ENCODE measurements at regions of chr2 and their contacts with region 1.

Region 1: DNA sequence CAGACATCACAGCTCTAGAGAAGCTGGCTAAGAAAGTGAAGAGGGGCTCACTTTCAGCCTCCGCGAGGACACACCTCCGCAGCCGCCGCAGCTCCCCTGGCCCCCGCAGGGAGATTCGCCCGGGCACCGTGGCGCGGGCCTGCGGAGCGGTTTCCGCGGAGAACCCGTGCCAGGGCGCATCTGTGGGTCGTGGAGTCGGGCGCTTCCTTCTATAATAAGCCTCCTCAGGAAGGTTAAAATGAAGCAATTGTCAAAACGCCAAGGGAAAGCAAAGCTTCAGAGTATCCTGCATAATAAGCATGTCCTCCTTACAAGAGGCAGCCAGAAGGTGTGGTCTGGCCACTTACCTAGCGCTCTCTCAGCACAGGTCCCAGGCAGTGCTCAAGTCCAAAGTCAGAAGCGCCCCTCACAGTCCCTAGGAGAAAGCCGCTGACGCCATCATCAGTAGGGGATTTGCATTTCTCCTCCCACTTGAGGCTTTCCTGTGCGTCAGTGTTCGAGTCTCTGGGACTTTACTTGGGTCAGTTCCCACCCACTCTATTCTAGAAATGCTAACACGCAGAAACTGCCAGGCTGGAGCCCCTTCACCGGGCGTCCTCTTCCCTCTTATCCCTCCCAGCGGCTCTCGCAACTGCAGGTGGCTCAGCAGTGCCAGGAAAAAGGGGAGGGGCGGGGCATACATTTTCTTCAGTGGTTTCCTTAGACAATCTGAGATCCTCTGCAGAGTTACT is at the start of gene STAT4:
- DNase-seq: peak; percentile 87 to 95 (median 89)
- H3K4me3 ChIP-seq: peak within 1 kb of the TSS; percentile 89 to 92
- H3K4me3 Mint-ChIP-seq: peak within 1 kb of the TSS; percentile 81 to 98 (median 96)
- H3K27ac ChIP-seq: peak within 1 kb of the TSS; percentile 99
- H3K27ac Mint-ChIP-seq: peak within 1 kb of the TSS; percentile 93 to 100 (median 98)
- H3K4me1 ChIP-seq: peaks cover 42% of the 10 kb centered on the region
- H3K4me1 Mint-ChIP-seq: peaks cover 31 to 74% (median 48%) of the 10 kb centered on the region in 4 donors
- H3K27me3 ChIP-seq: no peaks in the 10 kb centered on the region
- H3K27me3 Mint-ChIP-seq: no peaks in the 10 kb centered on the region
- total RNA-seq, gene STAT4: 114 to 119 TPM

Region 2: DNA sequence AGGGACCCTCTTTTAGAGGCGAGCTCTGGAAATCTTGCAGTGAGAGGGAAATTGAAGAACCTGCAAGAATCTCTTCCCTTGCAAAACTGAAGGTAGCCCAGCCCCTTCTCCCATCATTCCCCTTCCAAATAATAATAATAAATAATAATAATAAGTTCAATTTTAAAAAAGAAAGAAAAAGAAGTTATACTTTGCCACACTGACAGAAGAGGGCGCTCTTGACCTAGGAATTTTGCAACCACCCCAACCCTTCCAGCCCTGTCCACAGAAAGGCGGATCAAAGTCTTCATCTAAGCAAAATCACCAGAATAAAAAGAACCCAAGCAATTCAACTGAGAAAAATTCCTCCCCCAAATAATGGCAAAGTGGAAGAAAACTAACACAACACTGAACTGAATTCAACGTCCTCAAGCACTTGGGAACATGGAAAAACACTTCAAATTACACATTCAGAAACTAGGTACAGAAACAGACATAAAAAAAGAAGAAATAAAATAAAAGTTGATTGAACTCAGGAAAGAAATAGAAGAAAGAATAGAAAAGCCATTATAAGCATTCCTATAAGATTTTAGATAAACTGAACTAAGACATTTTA is 369.1 kb before region 1 on chr2:
- CTCF ChIA-PET with region 1: interaction called, 8 read pairs
- POLR2A ChIA-PET with region 1: no interaction called
- intact Hi-C with region 1: loop called (anchors 1 kb)
- DNase-seq: peak in 4 of 5 donors; percentile 35 to 51 (median 50)
- H3K4me3 ChIP-seq: no peak overlapping the region
- H3K4me3 Mint-ChIP-seq: no peak overlapping the region
- H3K27ac ChIP-seq: no peak overlapping the region
- H3K27ac Mint-ChIP-seq: peak overlapping the region in 1 of 7 donors; percentile 65
- H3K4me1 ChIP-seq: no peaks in the 10 kb centered on the region
- H3K4me1 Mint-ChIP-seq: peaks cover 0 to 3% (median 1%) of the 10 kb centered on the region in 4 donors
- H3K27me3 ChIP-seq: no peaks in the 10 kb centered on the region
- H3K27me3 Mint-ChIP-seq: peaks cover 3 to 9% of the 10 kb centered on the region in 2 donors

Region 3: DNA sequence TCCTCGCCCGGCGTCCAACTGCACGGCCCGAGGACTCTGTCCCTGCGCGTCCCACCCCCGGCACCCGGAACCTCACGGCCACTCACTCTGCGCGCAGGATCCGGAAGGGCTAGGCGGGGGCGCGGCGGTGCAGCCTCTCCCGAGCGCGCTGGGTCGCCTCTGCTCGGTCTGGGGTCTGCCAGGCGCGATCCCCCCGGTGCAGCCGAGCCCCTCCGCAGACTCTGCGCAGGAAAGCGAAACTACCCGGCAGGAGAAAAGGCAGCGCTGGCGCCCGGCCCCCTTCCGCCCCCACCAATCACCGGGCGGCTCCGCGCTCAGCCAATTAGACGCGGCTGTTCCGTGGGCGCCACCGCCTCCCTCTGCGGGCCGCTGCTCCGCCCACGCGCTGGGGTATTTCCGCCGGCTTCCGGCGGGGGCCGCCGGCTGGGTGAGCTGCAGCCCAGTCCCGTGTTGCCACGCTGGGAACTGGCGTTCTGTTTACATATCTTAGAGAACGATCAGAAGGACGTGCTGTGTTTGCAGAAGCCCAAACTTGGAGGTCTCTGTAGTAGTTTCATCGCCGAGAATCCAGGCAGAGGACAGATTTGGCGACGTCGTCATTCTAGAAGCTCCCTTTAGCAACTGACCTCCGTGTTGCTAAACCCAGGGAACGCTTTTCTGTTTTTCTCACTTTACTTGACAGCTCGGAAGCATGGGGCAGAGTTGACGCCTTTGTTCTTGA is 136.7 kb before region 1 on chr2 and contains the start of gene STAT1:
- CTCF ChIA-PET with region 1: interaction called, 9 read pairs
- POLR2A ChIA-PET with region 1: interaction called, 38 read pairs
- intact Hi-C with region 1: no loop called
- DNase-seq: peak; percentile 94 to 98 (median 96)
- H3K4me3 ChIP-seq: peak within 1 kb of the TSS; percentile 92 to 95
- H3K4me3 Mint-ChIP-seq: no peak within 1 kb of the TSS
- H3K27ac ChIP-seq: peak within 1 kb of the TSS; percentile 89
- H3K27ac Mint-ChIP-seq: no peak within 1 kb of the TSS
- H3K4me1 ChIP-seq: peaks cover 71% of the 10 kb centered on the region
- H3K4me1 Mint-ChIP-seq: peaks cover 29 to 48% (median 33%) of the 10 kb centered on the region in 4 donors
- H3K27me3 ChIP-seq: no peaks in the 10 kb centered on the region
- H3K27me3 Mint-ChIP-seq: no peaks in the 10 kb centered on the region
- total RNA-seq, gene STAT1: 130 TPM

Region 4: DNA sequence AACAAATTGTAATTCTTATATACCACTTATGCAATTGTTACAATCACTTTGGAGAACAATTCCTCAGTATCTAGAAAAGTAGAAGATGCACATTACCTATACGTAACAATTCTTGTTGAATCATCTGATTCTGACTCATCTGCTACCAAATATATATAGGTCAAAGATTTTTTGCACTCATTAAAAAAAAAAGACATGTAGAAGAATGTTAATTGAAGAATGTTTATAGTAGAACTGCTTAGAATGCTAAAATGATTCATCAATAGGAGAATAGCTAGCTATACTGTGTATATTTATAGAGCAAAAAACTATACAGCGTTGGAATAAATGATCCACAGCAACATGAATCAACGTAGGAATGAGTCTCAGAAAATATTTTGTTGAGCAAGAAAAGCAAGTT is 107.3 kb before region 1 on chr2:
- CTCF ChIA-PET with region 1: interaction called, 567 read pairs
- POLR2A ChIA-PET with region 1: interaction called, 11 read pairs
- intact Hi-C with region 1: no loop called
- DNase-seq: no peak
- H3K4me3 ChIP-seq: no peak overlapping the region
- H3K4me3 Mint-ChIP-seq: no peak overlapping the region
- H3K27ac ChIP-seq: no peak overlapping the region
- H3K27ac Mint-ChIP-seq: peak overlapping the region in 2 of 7 donors; percentile 25 to 40
- H3K4me1 ChIP-seq: peaks cover 17% of the 10 kb centered on the region
- H3K4me1 Mint-ChIP-seq: peaks cover 15 to 34% (median 23%) of the 10 kb centered on the region in 4 donors
- H3K27me3 ChIP-seq: no peaks in the 10 kb centered on the region
- H3K27me3 Mint-ChIP-seq: no peaks in the 10 kb centered on the region

Region 5: DNA sequence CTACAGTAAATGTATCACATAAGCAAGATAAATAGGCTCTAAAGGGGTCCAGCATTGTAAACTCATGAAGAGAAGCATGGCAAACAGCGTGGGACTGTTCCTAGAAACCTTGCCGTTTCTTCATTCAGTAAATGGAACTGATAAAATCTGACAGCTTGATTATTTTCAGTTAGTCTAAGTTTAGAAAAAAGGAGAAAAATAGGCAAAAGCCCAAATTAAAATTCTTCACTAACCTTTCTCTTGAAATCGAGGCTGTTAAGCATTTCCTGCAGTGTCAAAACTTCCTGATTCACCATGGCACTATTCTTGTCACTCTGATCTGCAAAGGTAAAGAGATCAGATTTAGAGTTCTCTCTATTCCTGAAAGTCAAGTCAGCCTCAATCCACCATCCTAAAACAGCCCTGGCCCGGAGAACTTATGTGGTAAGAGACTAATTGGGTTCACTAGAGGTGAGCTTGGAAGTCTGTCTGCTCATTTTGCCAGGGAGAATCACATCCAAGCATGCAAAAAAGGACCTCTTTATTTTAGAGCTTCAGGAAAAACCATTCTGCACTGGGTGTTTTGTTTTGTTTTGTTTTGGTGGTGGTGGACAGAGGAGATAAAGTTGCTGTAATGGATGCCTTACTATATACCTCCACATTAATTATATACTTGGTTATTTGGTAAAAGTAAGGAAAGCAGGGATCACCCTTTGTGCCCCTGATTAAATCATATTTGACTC is 84.4 kb before region 1 on chr2:
- CTCF ChIA-PET with region 1: interaction called, 68 read pairs
- POLR2A ChIA-PET with region 1: interaction called, 91 read pairs
- intact Hi-C with region 1: no loop called
- DNase-seq: peak in 1 of 5 donors; percentile 11
- H3K4me3 ChIP-seq: peak overlapping the region in 1 of 2 donors; percentile 4
- H3K4me3 Mint-ChIP-seq: peak overlapping the region; percentile 28 to 86 (median 74)
- H3K27ac ChIP-seq: peak overlapping the region; percentile 56
- H3K27ac Mint-ChIP-seq: peak overlapping the region; percentile 64 to 93 (median 87)
- H3K4me1 ChIP-seq: peaks cover 96% of the 10 kb centered on the region
- H3K4me1 Mint-ChIP-seq: peaks cover 66 to 86% (median 76%) of the 10 kb centered on the region in 4 donors
- H3K27me3 ChIP-seq: no peaks in the 10 kb centered on the region
- H3K27me3 Mint-ChIP-seq: no peaks in the 10 kb centered on the region

Region 6: DNA sequence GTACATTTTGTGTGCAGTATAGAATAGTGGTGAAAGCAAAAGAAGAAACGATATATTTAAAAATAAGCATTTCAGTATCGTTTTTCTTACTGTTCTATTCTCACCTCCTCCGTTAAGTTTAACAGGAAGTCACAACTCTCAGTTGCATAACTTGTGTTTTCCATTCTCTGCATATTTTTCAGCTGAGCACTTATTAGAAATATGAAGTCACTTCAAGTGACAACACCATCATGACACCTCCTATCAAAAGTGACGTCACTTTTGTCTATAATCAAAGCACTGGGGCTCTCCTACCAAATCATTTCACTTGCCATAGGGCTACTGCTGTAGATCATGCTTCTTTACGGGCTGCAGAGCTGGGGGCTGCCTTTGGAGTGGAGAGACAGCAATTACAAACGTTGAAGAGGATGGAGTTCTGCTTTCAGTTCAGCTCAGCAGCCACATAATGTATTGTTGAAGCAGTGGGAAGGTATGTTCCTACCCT is 36.3 kb before region 1 on chr2:
- CTCF ChIA-PET with region 1: interaction called, 22 read pairs
- POLR2A ChIA-PET with region 1: interaction called, 77 read pairs
- intact Hi-C with region 1: loop called (anchors 1 kb)
- DNase-seq: peak; percentile 43 to 71 (median 57)
- H3K4me3 ChIP-seq: peak overlapping the region in 1 of 2 donors; percentile 35
- H3K4me3 Mint-ChIP-seq: peak overlapping the region; percentile 53 to 78 (median 72)
- H3K27ac ChIP-seq: peak overlapping the region; percentile 55
- H3K27ac Mint-ChIP-seq: peak overlapping the region; percentile 89 to 97 (median 93)
- H3K4me1 ChIP-seq: peaks cover 50% of the 10 kb centered on the region
- H3K4me1 Mint-ChIP-seq: peaks cover 51 to 83% (median 67%) of the 10 kb centered on the region in 4 donors
- H3K27me3 ChIP-seq: no peaks in the 10 kb centered on the region
- H3K27me3 Mint-ChIP-seq: no peaks in the 10 kb centered on the region

Region 7: DNA sequence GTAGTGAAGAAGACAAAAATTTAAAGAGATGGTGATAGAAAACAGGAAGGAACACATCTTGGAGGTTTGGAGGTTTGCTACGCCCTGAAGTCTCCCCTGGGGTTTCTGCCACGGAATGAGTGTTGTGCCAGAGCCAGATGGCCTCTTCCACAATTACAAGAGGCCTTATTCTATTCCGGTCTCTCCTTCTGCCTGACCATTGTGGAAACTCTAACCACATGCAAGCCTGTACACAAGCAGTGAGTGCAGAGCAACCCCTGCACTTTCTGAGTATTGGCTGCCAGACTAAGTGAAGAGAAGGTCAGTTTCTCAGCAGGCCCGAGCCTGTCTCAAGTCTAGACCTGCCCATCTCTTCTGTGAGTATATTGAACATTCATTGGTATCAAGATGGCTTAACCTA is 71.7 kb after region 1 on chr2:
- CTCF ChIA-PET with region 1: no interaction called
- POLR2A ChIA-PET with region 1: no interaction called
- intact Hi-C with region 1: no loop called
- DNase-seq: no peak
- H3K4me3 ChIP-seq: no peak overlapping the region
- H3K4me3 Mint-ChIP-seq: no peak overlapping the region
- H3K27ac ChIP-seq: no peak overlapping the region
- H3K27ac Mint-ChIP-seq: no peak overlapping the region
- H3K4me1 ChIP-seq: no peaks in the 10 kb centered on the region
- H3K4me1 Mint-ChIP-seq: no peaks in the 10 kb centered on the region
- H3K27me3 ChIP-seq: no peaks in the 10 kb centered on the region
- H3K27me3 Mint-ChIP-seq: peaks cover 0 to 1% of the 10 kb centered on the region in 2 donors

Measured in CD4-positive, alpha-beta memory T cell (primary cell).